ENCODE measurements at regions of chr16 and their contacts with region 1.

Region 1: GRCh38 chr16:56700195-56700594 is 17.9 kb downstream of the MT1X start:
- DNase-seq: no peak
- CTCF ChIP-seq: no peak

Region 2: DNA sequence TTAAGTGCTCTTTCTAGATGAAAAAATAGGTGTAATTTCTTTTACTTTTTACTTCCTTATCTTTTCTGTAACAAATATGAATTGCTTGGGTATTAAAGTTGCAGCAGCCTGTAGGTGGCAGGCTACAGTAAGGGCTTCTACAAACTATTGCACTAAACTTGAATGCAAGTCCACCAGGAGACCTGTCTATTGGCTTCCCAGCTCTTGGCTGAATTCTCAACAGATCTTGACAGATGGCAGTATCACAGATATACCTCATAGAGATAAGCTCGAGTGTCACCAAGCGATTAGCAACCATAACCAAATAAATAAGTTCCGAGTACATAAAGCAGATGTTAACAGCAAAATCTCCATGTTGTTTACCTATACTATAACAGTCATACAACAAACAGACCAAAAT is 186.2 kb before region 1 on chr16:
- CTCF ChIA-PET with region 1: interaction called, 17 read pairs
- POLR2A ChIA-PET with region 1: no interaction called
- DNase-seq: peak; percentile 32
- CTCF ChIP-seq: peak; percentile 64

Region 3: DNA sequence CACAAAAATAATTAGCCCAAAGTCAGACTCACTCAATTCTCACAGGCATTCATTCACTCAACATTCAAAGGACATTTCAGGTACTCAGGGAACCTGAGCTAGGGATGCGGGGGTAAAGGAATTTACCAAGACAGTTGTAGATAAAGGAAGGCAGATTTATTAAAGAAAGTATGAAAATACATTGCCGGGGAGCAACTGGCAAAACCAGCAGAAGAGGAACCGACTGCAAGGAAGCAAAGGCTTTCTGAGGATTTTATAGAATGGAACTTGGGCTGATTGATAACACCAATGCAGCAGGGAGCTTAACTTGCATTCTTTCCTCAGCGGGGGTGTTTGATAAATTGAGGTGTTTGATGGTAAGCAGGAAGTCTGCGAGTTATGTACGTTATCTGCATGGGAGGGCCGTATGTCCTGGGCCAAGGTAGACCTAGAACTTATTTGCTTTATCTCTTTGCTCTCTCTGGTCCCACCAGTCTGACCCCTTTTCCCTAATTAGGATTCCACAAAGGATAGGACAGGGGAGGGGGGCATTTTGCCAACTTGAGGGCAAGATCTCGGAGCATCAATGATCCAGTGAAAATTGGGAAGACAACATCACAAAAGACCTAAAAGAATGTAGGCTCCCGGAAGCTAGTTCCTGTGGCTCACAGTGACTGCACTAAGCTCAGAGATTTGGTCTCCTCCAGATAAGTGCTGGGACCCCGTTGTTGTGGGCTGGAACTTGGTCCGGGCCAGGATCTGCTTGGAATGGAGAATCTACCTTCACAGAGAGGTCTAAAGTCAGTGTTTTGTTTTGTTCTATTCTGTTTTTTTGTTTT is 116.6 kb before region 1 on chr16:
- CTCF ChIA-PET with region 1: interaction called, 20 read pairs
- POLR2A ChIA-PET with region 1: no interaction called
- DNase-seq: no peak
- CTCF ChIP-seq: no peak

Region 4: DNA sequence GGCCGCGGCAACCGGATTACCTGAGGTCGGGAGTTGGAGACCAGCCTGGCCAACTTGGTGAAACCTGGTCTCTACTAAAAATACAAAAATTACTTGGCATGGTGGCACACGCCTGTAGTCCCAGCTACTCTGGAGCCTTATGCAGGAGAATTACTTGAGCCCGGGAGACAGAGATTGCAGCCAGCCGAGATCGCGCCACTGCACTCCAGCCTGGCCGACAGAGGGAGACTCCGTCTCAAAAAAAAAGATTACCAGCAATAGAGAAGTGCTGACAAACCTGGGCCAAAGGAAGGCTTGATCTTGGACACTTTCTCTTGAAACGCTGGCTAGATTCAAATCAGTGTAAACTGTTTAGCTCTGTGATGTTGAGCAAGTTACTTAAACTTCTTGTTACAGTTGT is 26.3 kb before region 1 on chr16:
- CTCF ChIA-PET with region 1: interaction called, 20 read pairs
- POLR2A ChIA-PET with region 1: no interaction called
- DNase-seq: no peak
- CTCF ChIP-seq: peak; percentile 50

Region 5: DNA sequence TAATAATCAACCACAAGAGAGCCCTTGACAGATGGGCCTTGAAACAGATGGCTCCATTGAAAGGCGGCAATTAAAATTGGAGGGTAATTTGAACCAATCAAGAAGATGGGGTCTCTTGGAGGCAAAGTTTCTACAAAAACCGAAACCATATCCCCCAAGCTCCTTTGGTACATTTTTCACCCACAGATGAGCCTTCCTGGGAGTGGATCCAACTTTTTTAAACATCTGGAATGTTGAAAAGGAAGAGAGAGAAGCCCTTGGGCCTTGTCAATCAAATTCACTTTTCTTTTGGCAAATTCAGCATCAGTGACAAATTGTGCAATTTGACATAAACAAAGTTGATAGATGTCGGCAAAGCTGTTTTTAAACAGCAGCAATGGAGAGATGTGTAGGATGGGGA is 16.6 kb after region 1 on chr16:
- CTCF ChIA-PET with region 1: interaction called, 42 read pairs
- POLR2A ChIA-PET with region 1: no interaction called
- DNase-seq: no peak
- CTCF ChIP-seq: no peak

Measured in GM10248 (cell line).